ENCODE measurements at regions of chr6 and their contacts with region 1.

Region 1: GRCh38 chr6:53651764-53652401 is 13.7 kb downstream of the KLHL31 start:
- DNase-seq: peak; percentile 74 to 80 (median 78)
- H3K4me3 ChIP-seq: peak overlapping the region; percentile 49 to 81 (median 58)
- H3K4me3 Mint-ChIP-seq: peak overlapping the region; percentile 81 to 91
- H3K27ac ChIP-seq: peak overlapping the region in 1 of 2 donors; percentile 49
- H3K27ac Mint-ChIP-seq: peak overlapping the region in 5 of 7 donors; percentile 30 to 86 (median 64)
- H3K4me1 ChIP-seq: peaks cover 26 to 31% of the 10 kb centered on the region in 2 donors
- H3K4me1 Mint-ChIP-seq: peaks cover 29% of the 10 kb centered on the region
- H3K27me3 ChIP-seq: peaks cover 4 to 11% of the 10 kb centered on the region in 2 donors
- H3K27me3 Mint-ChIP-seq: peaks cover 3 to 12% (median 7%) of the 10 kb centered on the region in 3 donors
- CTCF ChIP-seq: no peak

Region 2: DNA sequence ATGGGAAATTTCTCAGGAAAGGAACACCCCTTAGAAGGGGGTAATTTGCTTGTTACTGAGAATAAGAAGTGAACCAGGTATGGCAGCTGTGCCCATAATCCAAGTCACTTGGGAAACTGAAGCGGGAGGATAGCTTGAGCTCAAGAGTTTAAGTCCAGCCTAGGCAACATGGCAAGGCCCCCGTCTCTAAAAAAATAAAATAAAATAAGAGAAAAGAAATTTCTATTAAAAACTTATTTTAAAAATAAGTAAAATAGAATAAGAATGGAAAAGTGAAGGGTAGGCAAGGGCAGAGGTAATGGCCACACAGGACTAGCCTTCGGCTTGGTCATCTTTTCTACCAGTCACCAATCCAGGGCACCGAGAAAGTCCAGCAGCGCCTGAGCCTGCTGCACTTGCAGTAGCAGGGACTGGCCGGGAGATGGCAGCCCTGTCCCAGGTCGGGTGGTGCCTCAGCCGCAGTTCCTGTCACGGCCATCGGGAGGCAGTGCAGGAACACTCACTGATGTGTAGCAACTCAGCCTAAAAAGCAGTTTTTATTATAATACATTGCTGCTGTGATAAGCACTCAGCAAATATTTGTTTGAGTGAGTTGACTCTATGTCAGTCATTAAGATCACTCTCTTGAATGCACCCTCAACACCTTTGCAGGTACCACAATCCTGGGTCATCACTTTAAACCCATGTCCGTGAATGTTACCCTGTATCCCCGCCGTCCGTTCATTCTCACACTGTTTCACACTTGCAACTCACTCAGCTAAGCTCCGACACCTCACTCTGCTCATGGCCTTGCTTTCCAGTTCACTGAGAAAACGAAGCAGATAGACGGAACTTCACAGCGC is 480.1 kb before region 1 on chr6:
- intact Hi-C with region 1: loop called in 1 of 2 experiments (anchors 10 kb)
- DNase-seq: peak; percentile 84 to 88 (median 86)
- H3K4me3 ChIP-seq: no peak overlapping the region
- H3K4me3 Mint-ChIP-seq: no peak overlapping the region
- H3K27ac ChIP-seq: no peak overlapping the region
- H3K27ac Mint-ChIP-seq: peak overlapping the region in 2 of 7 donors; percentile 52 to 74
- H3K4me1 ChIP-seq: no peaks in the 10 kb centered on the region
- H3K4me1 Mint-ChIP-seq: peaks cover 9% of the 10 kb centered on the region
- H3K27me3 ChIP-seq: no peaks in the 10 kb centered on the region
- H3K27me3 Mint-ChIP-seq: peaks cover 0 to 2% (median 0%) of the 10 kb centered on the region in 3 donors
- CTCF ChIP-seq: peak; percentile 100

Region 3: GRCh38 chr6:53492860-53493634 is 158.8 kb before region 1 on chr6:
- intact Hi-C with region 1: loop called (anchors 2 to 5 kb)
- DNase-seq: peak; percentile 22 to 59 (median 49)
- H3K4me3 ChIP-seq: no peak overlapping the region
- H3K4me3 Mint-ChIP-seq: peak overlapping the region; percentile 15 to 21
- H3K27ac ChIP-seq: no peak overlapping the region
- H3K27ac Mint-ChIP-seq: no peak overlapping the region
- H3K4me1 ChIP-seq: peaks cover 3 to 5% of the 10 kb centered on the region in 2 donors
- H3K4me1 Mint-ChIP-seq: peaks cover 7% of the 10 kb centered on the region
- H3K27me3 ChIP-seq: no peaks in the 10 kb centered on the region
- H3K27me3 Mint-ChIP-seq: peaks cover 2 to 7% (median 5%) of the 10 kb centered on the region in 3 donors
- CTCF ChIP-seq: peak; percentile 79

Region 4: GRCh38 chr6:53544470-53545308 is 107.2 kb before region 1 on chr6 and contains the start of gene GCLC:
- intact Hi-C with region 1: loop called (anchors 2 kb)
- DNase-seq: peak; percentile 90 to 91 (median 90)
- H3K4me3 ChIP-seq: peak within 1 kb of the TSS; percentile 52 to 89 (median 84)
- H3K4me3 Mint-ChIP-seq: peak within 1 kb of the TSS; percentile 97
- H3K27ac ChIP-seq: peak within 1 kb of the TSS; percentile 48 to 83
- H3K27ac Mint-ChIP-seq: peak within 1 kb of the TSS; percentile 79 to 92 (median 91)
- H3K4me1 ChIP-seq: peaks cover 40 to 50% of the 10 kb centered on the region in 2 donors
- H3K4me1 Mint-ChIP-seq: peaks cover 56% of the 10 kb centered on the region
- H3K27me3 ChIP-seq: no peaks in the 10 kb centered on the region
- H3K27me3 Mint-ChIP-seq: peaks cover 2 to 9% (median 5%) of the 10 kb centered on the region in 3 donors
- CTCF ChIP-seq: peak; percentile 89
- polyA plus RNA-seq, gene GCLC: 6.4 to 15.7 (median 10.1) TPM

Region 5: GRCh38 chr6:53581173-53581773 is 70.6 kb before region 1 on chr6:
- intact Hi-C with region 1: loop called in 1 of 2 experiments (anchors 5 kb)
- DNase-seq: peak in 1 of 3 donors; percentile 9
- H3K4me3 ChIP-seq: peak overlapping the region in 1 of 3 experiments; percentile 39
- H3K4me3 Mint-ChIP-seq: no peak overlapping the region
- H3K27ac ChIP-seq: peak overlapping the region in 1 of 2 donors; percentile 24
- H3K27ac Mint-ChIP-seq: peak overlapping the region in 6 of 7 donors; percentile 4 to 78 (median 66)
- H3K4me1 ChIP-seq: peaks cover 46 to 51% of the 10 kb centered on the region in 2 donors
- H3K4me1 Mint-ChIP-seq: peaks cover 46% of the 10 kb centered on the region
- H3K27me3 ChIP-seq: no peaks in the 10 kb centered on the region
- H3K27me3 Mint-ChIP-seq: peaks cover 0 to 4% (median 3%) of the 10 kb centered on the region in 3 donors
- CTCF ChIP-seq: no peak

Region 6: GRCh38 chr6:54020334-54020733 is 368.5 kb after region 1 on chr6:
- intact Hi-C with region 1: no loop called
- DNase-seq: no peak
- H3K4me3 ChIP-seq: no peak overlapping the region
- H3K4me3 Mint-ChIP-seq: no peak overlapping the region
- H3K27ac ChIP-seq: no peak overlapping the region
- H3K27ac Mint-ChIP-seq: no peak overlapping the region
- H3K4me1 ChIP-seq: no peaks in the 10 kb centered on the region
- H3K4me1 Mint-ChIP-seq: no peaks in the 10 kb centered on the region
- H3K27me3 ChIP-seq: no peaks in the 10 kb centered on the region
- H3K27me3 Mint-ChIP-seq: peaks cover 0 to 2% (median under 1%) of the 10 kb centered on the region in 3 donors
- CTCF ChIP-seq: no peak

Region 7: DNA sequence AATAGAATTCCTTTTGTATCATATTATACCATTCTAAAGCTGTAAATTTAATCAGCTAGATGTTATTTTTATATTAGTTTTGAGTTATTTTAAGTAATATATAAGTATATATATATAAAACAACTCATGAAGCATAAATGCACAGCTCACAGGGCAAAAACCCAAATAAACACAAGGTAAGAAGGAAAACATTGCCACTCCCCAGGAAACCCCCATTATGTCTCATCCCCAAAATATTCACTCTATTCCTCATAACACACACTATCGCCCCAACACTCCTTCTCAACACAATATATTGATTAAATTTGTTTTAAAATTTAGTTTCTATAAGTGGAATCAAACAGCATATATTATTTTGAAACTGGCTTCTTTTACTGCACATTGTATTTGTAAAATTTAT is 1096.1 kb after region 1 on chr6:
- intact Hi-C with region 1: no loop called
- DNase-seq: no peak
- H3K4me3 ChIP-seq: no peak overlapping the region
- H3K4me3 Mint-ChIP-seq: no peak overlapping the region
- H3K27ac ChIP-seq: no peak overlapping the region
- H3K27ac Mint-ChIP-seq: no peak overlapping the region
- H3K4me1 ChIP-seq: no peaks in the 10 kb centered on the region
- H3K4me1 Mint-ChIP-seq: no peaks in the 10 kb centered on the region
- H3K27me3 ChIP-seq: no peaks in the 10 kb centered on the region
- H3K27me3 Mint-ChIP-seq: no peaks in the 10 kb centered on the region
- CTCF ChIP-seq: no peak